PC-9 (cell line): ENCODE measurements at regions of chr1 and their contacts with region 1.

Region 1: DNA sequence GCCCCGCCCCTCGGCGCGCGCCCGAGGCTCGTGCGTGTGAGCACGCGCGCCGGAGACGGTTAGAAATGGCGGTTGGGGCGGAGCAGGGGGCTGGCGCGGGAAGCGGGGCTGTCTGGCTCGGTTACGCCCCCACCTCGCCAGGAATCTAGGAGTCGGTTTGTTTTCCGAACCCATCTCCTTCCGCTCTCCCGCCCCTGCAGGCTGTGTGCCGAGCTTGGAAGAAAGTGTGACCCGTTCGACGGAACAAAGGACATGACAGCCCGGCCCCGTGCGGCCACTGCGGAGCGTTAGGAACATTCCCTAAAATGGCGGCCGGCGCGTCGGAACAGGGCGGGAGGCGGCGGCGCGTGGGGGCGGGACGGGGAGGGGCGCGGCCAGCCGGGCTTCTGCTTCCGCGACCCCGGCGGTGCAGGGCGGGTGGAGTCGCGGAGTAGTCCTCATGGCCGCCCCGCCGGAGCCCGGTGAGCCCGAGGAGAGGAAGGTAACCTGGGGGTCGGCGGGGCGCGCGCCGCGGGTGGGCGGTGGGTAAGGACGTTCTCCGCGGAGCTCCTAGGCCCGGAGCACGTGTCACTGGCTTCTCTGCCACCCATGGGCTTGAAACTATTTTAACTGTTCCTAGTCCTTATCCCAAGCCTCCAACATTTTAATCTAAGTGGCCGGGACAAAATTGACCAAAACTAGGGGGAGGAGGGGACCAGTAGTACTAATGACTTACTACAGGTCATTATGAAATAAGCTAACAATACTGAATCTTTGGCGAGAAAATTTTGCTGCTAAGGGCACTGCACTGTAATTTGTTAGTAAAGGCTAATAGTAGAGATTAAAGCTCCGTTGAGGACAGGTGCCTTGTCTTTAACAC is at the start of gene COX20:
- DNase-seq: peak in 1 of 2 experiments; percentile 75
- H3K4me3 ChIP-seq: peak within 1 kb of the TSS; percentile 79
- H3K27ac ChIP-seq: peak within 1 kb of the TSS; percentile 98
- H3K4me1 ChIP-seq: peaks cover 22% of the 10 kb centered on the region
- H3K27me3 ChIP-seq: no peaks in the 10 kb centered on the region
- CTCF ChIP-seq: no peak
- total RNA-seq, gene COX20: 34.5 and 40.7 TPM in 2 replicates

Region 2: DNA sequence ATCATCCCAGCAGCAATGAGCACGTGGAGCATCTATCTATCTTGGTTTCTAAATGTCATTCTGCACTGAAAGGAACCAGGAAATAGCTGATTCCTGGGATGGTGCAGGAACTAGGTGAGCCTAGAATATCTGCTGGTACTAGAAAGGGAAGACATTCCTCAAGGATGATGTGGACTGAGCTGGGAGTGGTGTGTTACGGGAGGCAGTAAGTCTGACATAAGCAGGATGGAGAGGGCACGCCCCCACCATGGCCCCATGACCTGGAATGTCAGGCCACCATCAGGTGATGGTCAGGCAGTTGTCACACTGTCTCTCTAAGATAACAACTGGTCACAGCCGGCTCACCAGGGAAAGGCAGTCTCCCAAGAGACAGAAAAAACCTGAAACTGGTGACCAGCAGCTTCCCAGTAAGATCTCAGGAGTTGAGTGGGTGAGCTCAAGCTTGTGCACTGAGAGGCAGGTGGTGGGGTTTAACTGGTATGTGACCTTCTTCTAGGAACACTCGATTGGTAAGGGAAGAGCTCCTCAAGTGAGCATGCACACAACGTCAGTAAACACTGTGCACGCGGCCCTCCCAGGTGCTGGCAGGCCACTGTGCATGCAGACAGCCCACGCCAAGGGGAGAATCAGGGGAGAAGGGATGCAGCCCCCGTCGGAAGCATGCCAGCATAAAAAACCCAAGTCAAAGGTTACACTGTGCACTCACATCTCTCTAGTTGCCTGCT is 532.5 kb before region 1 on chr1:
- CTCF ChIA-PET with region 1: no interaction called
- POLR2A ChIA-PET with region 1: interaction called, 4 read pairs
- intact Hi-C with region 1: loop called (anchors 10 kb)
- DNase-seq: peak; percentile 84 to 92
- H3K4me3 ChIP-seq: no peak overlapping the region
- H3K27ac ChIP-seq: peak overlapping the region; percentile 69
- H3K4me1 ChIP-seq: peaks cover 39% of the 10 kb centered on the region
- H3K27me3 ChIP-seq: no peaks in the 10 kb centered on the region
- CTCF ChIP-seq: no peak

Region 3: DNA sequence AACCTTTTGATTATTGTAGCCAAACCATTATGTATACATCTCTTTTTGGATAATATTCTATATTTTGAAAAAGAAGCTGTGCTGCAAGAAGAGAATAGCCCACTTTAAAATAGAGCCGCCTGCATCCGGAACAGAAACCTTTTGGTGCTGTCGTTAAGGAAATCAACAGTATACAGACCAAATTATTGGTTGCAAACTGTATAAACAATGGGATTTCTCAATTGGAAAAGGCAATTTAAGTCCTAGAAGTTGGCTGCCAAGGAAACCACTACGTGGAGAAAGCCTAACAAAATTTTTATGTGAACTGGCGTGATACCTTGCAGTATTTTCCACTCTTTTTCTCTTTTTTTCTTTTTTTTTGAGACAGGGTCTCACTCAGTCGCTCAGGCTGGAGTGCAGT is 156.8 kb before region 1 on chr1:
- CTCF ChIA-PET with region 1: no interaction called
- POLR2A ChIA-PET with region 1: interaction called, 11 read pairs
- intact Hi-C with region 1: no loop called
- DNase-seq: no peak
- H3K4me3 ChIP-seq: no peak overlapping the region
- H3K27ac ChIP-seq: no peak overlapping the region
- H3K4me1 ChIP-seq: no peaks in the 10 kb centered on the region
- H3K27me3 ChIP-seq: no peaks in the 10 kb centered on the region
- CTCF ChIP-seq: no peak

Region 4: GRCh38 chr1:244864253-244865027 is 28.9 kb after region 1 on chr1 and contains the start of gene HNRNPU:
- CTCF ChIA-PET with region 1: no interaction called
- POLR2A ChIA-PET with region 1: interaction called, 6 read pairs
- intact Hi-C with region 1: loop called (anchors 1 kb)
- DNase-seq: peak; percentile 84 to 97
- H3K4me3 ChIP-seq: peak within 1 kb of the TSS; percentile 98
- H3K27ac ChIP-seq: peak within 1 kb of the TSS; percentile 70
- H3K4me1 ChIP-seq: peaks cover 31% of the 10 kb centered on the region
- H3K27me3 ChIP-seq: no peaks in the 10 kb centered on the region
- CTCF ChIP-seq: peak; percentile 47; the same call in 1 of the 2 replicates
- total RNA-seq, gene HNRNPU: 291 and 376 TPM in 2 replicates

Region 5: DNA sequence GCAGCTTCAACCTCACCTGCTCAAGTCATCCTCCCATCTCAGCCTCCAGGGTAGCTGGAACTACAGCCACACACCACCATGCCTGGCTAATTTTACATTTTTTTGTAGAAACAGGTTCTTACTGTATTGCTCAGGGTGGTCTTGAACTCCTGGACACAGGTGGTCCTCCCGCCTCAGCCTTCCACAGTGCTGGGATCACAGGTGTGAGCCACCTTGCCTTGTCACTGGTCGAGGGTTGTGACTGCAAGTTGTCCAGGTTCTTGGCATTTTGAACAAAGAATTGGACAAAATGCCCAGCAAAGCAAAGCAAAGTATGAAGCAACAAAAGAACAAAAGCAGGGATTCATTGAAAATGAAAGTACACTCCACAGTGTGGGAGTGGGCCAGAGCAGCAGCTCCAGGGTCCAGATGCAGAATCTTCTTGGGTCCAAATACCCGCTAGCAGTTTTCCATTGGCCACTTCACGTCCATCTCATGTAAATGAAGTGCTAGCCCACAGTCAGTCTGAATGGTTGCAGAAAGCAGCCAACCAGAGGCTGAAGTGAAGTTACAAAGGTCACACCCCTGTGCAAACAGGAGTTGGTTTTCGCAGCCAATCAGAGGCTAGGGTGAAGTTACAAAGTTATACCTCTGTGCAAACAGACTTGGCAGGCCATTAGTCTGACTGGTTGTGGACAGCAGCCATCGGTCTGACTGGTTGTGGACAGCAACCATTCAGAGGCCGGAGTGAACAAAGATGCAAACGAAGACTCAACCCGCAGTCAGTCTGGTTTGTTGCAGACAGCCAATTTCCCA is 209.8 kb after region 1 on chr1:
- CTCF ChIA-PET with region 1: interaction called, 8 read pairs
- POLR2A ChIA-PET with region 1: no interaction called
- intact Hi-C with region 1: loop called (anchors 2 kb)
- DNase-seq: no peak
- H3K4me3 ChIP-seq: no peak overlapping the region
- H3K27ac ChIP-seq: no peak overlapping the region
- H3K4me1 ChIP-seq: no peaks in the 10 kb centered on the region
- H3K27me3 ChIP-seq: peaks cover 36% of the 10 kb centered on the region; the same call in 1 of the 2 replicates
- CTCF ChIP-seq: no peak